Ovary (tissue), 10 donors: ENCODE measurements at regions of chr3 and their contacts with region 1.

Region 1: GRCh38 chr3:149366941-149367840 is 10.3 kb downstream of the TM4SF1 start:
- DNase-seq: no peak
- H3K4me3 ChIP-seq: no peak overlapping the region
- H3K27ac ChIP-seq: no peak overlapping the region
- H3K4me1 ChIP-seq: peaks cover 2% of the 10 kb centered on the region
- H3K27me3 ChIP-seq: no peaks in the 10 kb centered on the region
- CTCF ChIP-seq: no peak
- EP300 ChIP-seq: no peak
- POLR2A ChIP-seq: no peak

Region 2: DNA sequence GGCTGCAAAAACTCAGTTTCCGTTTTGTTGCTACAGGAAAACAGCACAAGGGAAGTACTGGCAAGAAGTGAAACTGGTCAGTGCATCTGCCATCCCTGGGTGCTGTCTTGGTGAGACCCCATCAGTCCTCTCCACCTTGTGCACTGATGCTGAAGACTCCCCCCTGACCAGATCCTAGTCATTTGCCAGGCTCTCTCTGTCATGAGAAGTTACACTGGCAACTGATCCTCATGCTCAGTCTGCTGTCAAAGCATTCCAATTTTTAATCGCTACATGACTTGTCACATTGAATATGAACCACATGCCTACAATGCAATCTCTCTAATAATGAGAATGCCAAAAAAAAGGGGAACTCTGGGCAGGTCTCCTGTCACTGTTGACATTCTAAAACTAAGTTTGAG is 1661.5 kb before region 1 on chr3:
- intact Hi-C with region 1: loop called in 1 of 4 experiments (anchors 5 kb)
- DNase-seq: no peak
- H3K4me3 ChIP-seq: no peak overlapping the region
- H3K27ac ChIP-seq: no peak overlapping the region
- H3K4me1 ChIP-seq: no peaks in the 10 kb centered on the region
- H3K27me3 ChIP-seq: no peaks in the 10 kb centered on the region
- CTCF ChIP-seq: no peak
- EP300 ChIP-seq: no peak
- POLR2A ChIP-seq: no peak

Region 3: DNA sequence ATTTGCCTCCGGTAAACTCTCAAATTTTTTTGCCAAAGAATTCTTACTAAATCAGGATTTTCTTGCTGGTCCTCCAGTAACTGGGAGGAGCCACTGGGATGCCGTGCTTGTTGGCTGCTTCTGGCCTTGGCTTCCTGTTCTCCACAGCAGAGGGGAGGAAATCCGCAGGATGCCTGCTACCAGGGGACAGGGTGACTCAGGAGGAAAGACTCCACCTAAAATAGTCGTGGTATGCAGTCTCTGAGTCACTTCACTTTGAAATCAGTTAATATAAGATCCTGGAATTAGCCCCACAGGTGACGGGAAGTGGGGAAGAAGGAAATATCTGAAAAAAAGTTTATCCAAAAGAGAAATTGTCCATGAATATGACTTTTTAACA is 27.3 kb before region 1 on chr3:
- intact Hi-C with region 1: no loop called
- DNase-seq: peak; percentile 61 to 80 (median 78)
- H3K4me3 ChIP-seq: no peak overlapping the region
- H3K27ac ChIP-seq: peak overlapping the region in 1 of 2 donors; percentile 72
- H3K4me1 ChIP-seq: peaks cover 9% of the 10 kb centered on the region
- H3K27me3 ChIP-seq: no peaks in the 10 kb centered on the region
- CTCF ChIP-seq: no peak
- EP300 ChIP-seq: no peak
- POLR2A ChIP-seq: no peak

Region 4: DNA sequence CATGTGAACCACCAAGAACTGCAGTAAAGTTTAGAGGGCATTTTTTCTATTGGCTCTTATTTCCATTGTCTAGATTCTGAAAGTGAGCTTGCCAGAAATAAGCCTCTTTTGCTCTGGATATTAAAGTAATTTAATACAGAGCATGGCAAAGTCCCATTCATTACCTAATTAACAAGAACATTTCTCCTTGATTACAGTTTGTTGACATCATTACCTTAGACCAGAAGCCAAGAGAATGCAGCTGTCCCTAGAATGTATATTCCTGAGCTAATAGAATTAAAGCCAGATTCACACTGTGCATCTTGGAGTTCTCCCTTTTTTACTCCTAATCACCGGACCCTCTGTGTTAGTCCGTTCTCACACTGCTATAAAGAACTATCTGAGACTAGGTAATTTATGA is 60.9 kb after region 1 on chr3:
- intact Hi-C with region 1: no loop called
- DNase-seq: no peak
- H3K4me3 ChIP-seq: no peak overlapping the region
- H3K27ac ChIP-seq: no peak overlapping the region
- H3K4me1 ChIP-seq: no peaks in the 10 kb centered on the region
- H3K27me3 ChIP-seq: no peaks in the 10 kb centered on the region
- CTCF ChIP-seq: no peak
- EP300 ChIP-seq: no peak
- POLR2A ChIP-seq: no peak

Region 5: DNA sequence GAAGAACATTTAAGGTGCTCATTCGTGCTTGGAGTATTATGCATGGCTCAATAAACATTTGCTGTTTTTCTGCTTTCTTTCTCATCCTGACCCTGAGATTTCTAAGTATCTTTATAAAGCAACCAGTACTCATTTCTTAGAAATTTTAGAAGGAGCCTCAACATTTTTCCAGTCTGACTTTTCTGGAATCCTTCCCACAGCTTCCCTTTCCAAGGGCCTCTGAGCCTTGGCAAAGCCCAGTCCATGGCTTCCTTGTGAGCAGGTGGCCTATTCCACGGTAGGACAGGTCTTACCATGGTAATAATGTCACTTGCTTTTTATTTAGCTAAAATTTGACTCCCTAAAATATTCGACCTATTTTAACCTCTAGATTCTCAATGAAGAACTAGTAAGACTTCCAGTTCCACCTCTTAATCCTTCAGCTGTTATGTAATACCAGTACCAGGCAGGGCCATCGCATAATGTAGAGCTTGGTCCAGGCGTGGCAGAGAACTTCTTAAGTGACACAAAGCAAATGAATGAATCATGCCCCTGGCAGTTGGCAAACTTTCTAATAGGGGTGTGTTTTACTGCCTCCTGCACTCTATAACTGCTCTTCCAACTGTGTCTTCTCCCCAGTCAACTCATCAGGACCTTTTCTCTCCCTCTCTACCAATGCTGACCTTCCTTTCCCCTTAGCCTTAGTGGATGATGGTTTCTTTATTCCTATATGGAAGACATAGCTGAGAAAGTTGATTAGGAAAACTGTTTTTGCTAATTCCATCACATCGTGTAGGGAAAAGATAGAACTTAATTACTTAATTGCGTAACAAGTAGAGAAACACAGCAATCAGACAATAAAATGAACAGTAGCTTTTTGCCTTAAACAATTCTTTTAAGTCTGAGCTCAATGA is 106.4 kb after region 1 on chr3:
- intact Hi-C with region 1: loop called in 1 of 4 experiments (anchors 10 kb)
- DNase-seq: peak in 3 of 5 donors; percentile 55 to 58 (median 57)
- H3K4me3 ChIP-seq: no peak overlapping the region
- H3K27ac ChIP-seq: peak overlapping the region in 1 of 2 donors; percentile 11
- H3K4me1 ChIP-seq: peaks cover 3% of the 10 kb centered on the region
- H3K27me3 ChIP-seq: no peaks in the 10 kb centered on the region
- CTCF ChIP-seq: no peak
- EP300 ChIP-seq: no peak
- POLR2A ChIP-seq: no peak